ENCODE measurements at regions of chr16 and their contacts with region 1.

Region 1: DNA sequence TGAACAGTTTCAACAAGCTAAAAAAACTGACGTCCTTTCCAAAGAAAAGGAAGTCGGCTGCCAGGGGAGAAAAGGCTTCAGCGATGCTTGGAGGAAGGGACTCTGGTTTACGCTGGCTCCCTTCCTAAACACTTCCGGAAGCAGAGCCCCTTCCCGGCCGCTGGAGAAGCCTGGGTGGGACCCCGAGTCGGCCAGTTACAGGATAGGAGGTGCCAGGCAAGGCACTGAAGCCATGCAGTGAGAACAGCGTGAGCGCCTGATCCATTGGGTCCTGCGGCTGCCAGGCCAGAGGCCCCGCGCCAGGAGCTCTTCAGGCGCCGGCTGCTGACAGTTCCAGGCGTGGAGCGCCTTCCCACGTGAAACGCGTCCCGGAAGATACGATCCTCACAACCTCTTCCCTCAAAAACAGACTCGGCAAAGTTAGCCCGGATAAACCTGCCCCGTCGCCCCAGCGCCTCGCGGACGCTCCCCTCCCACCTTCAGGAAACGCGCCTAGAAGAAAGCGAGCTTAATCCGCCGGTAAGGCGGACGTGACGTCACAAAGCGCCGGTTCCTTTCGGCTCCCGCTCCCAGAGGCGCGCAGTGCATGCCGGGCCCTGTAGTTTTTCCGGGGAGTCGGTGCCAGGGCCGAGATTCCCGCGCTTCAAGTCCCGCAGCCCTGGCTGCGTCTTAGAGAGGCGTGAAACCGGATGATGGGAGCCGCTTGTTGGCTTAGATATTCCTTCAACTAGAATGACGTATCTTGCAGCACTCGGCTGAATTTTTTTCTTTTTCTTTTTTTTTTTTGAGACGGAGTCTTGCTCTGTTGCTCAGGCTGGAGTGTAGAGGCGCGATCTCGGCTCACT is at the start of gene ADAT1:
- DNase-seq: peak; percentile 94 to 98
- ATAC-seq: peak; percentile 95 to 98
- H3K4me3 ChIP-seq: peak within 1 kb of the TSS; percentile 85
- H3K27ac ChIP-seq: peak within 1 kb of the TSS; percentile 91 to 96
- H3K4me1 ChIP-seq: peaks cover 19% of the 10 kb centered on the region
- CTCF ChIP-seq: no peak
- EP300 ChIP-seq: no peak
- POLR2A ChIP-seq: peak; percentile 88
- RAD21 ChIP-seq: no peak
- polyA plus RNA-seq, gene ADAT1: 53.5 and 70.0 TPM in 2 replicates

Region 2: GRCh38 chr16:75555707-75556430 is 67.1 kb before region 1 on chr16 and contains the start of gene TMEM231:
- CTCF ChIA-PET with region 1: no interaction called
- POLR2A ChIA-PET with region 1: interaction called, 11 read pairs
- DNase-seq: peak; percentile 91 to 95
- ATAC-seq: peak; percentile 95
- H3K4me3 ChIP-seq: peak within 1 kb of the TSS; percentile 80
- H3K27ac ChIP-seq: peak within 1 kb of the TSS; percentile 70 to 76
- H3K4me1 ChIP-seq: peaks cover 13% of the 10 kb centered on the region; the same call in 2 of the 3 replicates
- CTCF ChIP-seq: no peak
- EP300 ChIP-seq: no peak
- POLR2A ChIP-seq: peak; percentile 49; the same call in 1 of the 2 replicates
- RAD21 ChIP-seq: no peak
- polyA plus RNA-seq, gene TMEM231: 11.4 and 17.7 TPM in 2 replicates

Region 3: DNA sequence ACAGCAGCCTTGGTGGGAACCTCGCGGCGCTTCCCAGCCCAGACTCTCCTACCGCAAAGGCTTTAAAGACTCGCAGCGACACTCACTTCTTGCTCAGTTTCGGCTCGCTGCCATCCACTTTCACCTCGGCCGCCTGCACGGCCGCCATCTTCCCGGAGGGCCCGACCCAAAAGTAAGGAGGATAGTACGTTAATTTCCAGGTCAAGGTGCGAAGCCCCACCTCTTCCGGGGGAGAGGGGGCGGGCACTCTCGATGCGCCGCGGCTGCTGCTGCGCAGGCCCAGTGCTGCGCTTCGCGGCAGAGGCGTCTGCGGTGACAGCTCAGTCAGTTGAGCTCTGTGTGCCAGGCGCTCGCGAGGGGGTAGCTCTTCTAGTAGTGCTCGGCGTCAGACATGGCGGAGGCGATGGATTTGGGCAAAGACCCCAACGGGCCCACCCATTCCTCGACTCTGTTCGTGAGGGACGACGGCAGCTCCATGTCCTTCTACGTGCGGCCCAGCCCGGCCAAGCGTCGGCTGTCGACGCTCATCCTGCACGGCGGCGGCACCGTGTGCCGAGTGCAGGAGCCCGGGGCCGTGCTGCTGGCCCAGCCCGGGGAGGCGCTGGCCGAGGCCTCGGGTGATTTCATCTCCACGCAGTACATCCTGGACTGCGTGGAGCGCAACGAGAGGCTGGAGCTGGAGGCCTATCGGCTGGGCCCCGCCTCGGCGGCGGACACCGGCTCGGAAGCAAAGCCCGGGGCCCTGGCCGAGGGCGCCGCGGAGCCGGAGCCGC is 24.7 kb after region 1 on chr16 and contains the starts of genes KARS1 and TERF2IP:
- CTCF ChIA-PET with region 1: interaction called, 5 read pairs
- POLR2A ChIA-PET with region 1: interaction called, 17 read pairs
- DNase-seq: peak; percentile 94
- ATAC-seq: peak; percentile 94 to 97
- H3K4me3 ChIP-seq: peak within 1 kb of the TSS; percentile 71
- H3K27ac ChIP-seq: peak within 1 kb of the TSS; percentile 92 to 96
- H3K4me1 ChIP-seq: peaks cover 22% of the 10 kb centered on the region; the same call in 2 of the 3 replicates
- CTCF ChIP-seq: no peak
- EP300 ChIP-seq: no peak
- POLR2A ChIP-seq: peak; percentile 90
- RAD21 ChIP-seq: no peak
- polyA plus RNA-seq, gene KARS1: 211 and 218 TPM in 2 replicates
- polyA plus RNA-seq, gene TERF2IP: 24.8 and 37.9 TPM in 2 replicates

Measured in A549 (cell line).